A549 (cell line): ENCODE measurements at regions of chr11 and their contacts with region 1.

Region 1: GRCh38 chr11:2420502-2421225 is 20.1 kb downstream of the TSSC4 start:
- DNase-seq: peak; percentile 69 to 91
- ATAC-seq: peak; percentile 90 to 97
- H3K4me3 ChIP-seq: no peak overlapping the region
- H3K27ac ChIP-seq: peak overlapping the region in 1 of 2 experiments; percentile 62; a peak in 3 of 6 replicates
- H3K4me1 ChIP-seq: no peaks in the 10 kb centered on the region
- CTCF ChIP-seq: peak; percentile 84
- EP300 ChIP-seq: no peak
- POLR2A ChIP-seq: no peak
- RAD21 ChIP-seq: peak; percentile 92

Region 2: GRCh38 chr11:2196970-2197770 is 223.5 kb before region 1 on chr11:
- CTCF ChIA-PET with region 1: interaction called, 98 read pairs
- POLR2A ChIA-PET with region 1: no interaction called
- DNase-seq: peak; percentile 75 to 80
- ATAC-seq: peak; percentile 72 to 92
- H3K4me3 ChIP-seq: no peak overlapping the region
- H3K27ac ChIP-seq: no peak overlapping the region
- H3K4me1 ChIP-seq: no peaks in the 10 kb centered on the region
- CTCF ChIP-seq: peak; percentile 82
- EP300 ChIP-seq: no peak
- POLR2A ChIP-seq: no peak
- RAD21 ChIP-seq: peak; percentile 94

Region 3: GRCh38 chr11:2290351-2290841 is 130.3 kb before region 1 on chr11:
- CTCF ChIA-PET with region 1: interaction called, 903 read pairs
- POLR2A ChIA-PET with region 1: no interaction called
- DNase-seq: peak in 1 of 2 experiments; percentile 27
- ATAC-seq: peak; percentile 68 to 73; a peak in 5 of 6 replicates
- H3K4me3 ChIP-seq: no peak overlapping the region
- H3K27ac ChIP-seq: no peak overlapping the region
- H3K4me1 ChIP-seq: no peaks in the 10 kb centered on the region
- CTCF ChIP-seq: no peak
- EP300 ChIP-seq: no peak
- POLR2A ChIP-seq: no peak
- RAD21 ChIP-seq: no peak

Region 4: DNA sequence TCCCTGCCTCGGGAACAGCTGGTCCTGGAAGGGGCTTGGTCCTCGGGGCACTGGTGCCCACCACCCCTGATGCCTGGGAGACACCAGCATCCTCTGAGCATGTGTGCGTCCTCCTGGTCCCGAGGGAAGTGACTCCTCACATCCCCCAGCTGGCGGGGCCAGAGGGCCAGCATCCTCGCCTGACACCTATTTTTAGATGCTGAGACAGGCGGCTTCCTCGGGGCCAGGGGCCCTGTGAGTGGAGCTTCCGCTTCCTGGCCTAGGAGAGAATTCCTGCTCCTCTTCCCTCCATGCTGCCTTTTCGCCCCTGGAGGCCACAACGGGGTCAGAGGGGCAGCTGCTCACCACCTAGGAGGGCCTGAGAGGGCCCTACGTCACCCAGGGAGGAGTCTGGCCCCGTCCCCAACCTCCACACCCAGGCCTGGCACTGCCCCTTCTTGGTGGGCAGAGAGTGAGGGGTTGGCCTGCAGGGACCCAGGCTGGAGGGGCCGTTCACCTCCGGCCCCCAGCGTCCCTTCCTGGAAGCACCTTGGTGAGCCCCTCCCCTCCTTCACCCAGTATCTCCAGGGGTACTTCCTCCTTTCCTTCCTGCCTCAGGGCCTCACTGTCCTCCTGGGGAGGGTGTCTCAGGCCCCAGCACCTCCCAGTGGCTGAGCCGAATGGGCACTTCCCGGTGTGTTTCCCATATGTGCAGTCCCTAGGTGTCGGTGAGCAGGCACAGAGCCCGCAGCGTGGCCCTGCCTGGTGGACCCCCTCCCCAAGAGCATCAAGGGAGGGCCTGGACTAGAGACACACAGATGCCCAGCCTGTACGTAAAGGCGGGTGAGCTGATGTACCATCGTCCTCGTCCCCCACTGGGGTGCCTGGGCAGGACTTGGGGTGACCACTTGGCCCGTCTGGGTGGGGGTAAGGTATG is 37.5 kb before region 1 on chr11:
- CTCF ChIA-PET with region 1: interaction called, 25 read pairs
- POLR2A ChIA-PET with region 1: interaction called, 3 read pairs
- DNase-seq: no peak
- ATAC-seq: peak in 1 of 2 experiments; percentile 32; a peak in 3 of 6 replicates
- H3K4me3 ChIP-seq: no peak overlapping the region
- H3K27ac ChIP-seq: peak overlapping the region in 1 of 2 experiments; percentile 58; a peak in 1 of 6 replicates
- H3K4me1 ChIP-seq: peaks cover 44% of the 10 kb centered on the region
- CTCF ChIP-seq: no peak
- EP300 ChIP-seq: no peak
- POLR2A ChIP-seq: no peak
- RAD21 ChIP-seq: no peak

Region 5: GRCh38 chr11:2436521-2437031 is 15.9 kb after region 1 on chr11:
- CTCF ChIA-PET with region 1: interaction called, 23 read pairs
- POLR2A ChIA-PET with region 1: no interaction called
- DNase-seq: no peak
- ATAC-seq: 0 out of 6 replicates have a peak, but pooled peaks of 1 of the 2 experiments have one; percentile 17
- H3K4me3 ChIP-seq: no peak overlapping the region
- H3K27ac ChIP-seq: no peak overlapping the region
- H3K4me1 ChIP-seq: no peaks in the 10 kb centered on the region
- CTCF ChIP-seq: no peak
- EP300 ChIP-seq: no peak
- POLR2A ChIP-seq: no peak
- RAD21 ChIP-seq: no peak

Region 6: GRCh38 chr11:2885676-2886081 is 465.0 kb after region 1 on chr11 and contains the start of gene CDKN1C:
- CTCF ChIA-PET with region 1: interaction called, 31 read pairs
- POLR2A ChIA-PET with region 1: no interaction called
- DNase-seq: peak; percentile 71 to 78
- ATAC-seq: peak; percentile 57 to 74
- H3K4me3 ChIP-seq: peak within 1 kb of the TSS; percentile 71
- H3K27ac ChIP-seq: peak within 1 kb of the TSS; percentile 66 to 82; a peak in 5 of 6 replicates
- H3K4me1 ChIP-seq: peaks cover 5% of the 10 kb centered on the region; the same call in 1 of the 3 replicates
- CTCF ChIP-seq: no peak
- EP300 ChIP-seq: no peak
- POLR2A ChIP-seq: peak; percentile 40
- RAD21 ChIP-seq: no peak
- polyA plus RNA-seq, gene CDKN1C: 0.40 and 0.41 TPM in 2 replicates